ENCODE measurements at regions of chr7 and their contacts with region 1.

Region 1: DNA sequence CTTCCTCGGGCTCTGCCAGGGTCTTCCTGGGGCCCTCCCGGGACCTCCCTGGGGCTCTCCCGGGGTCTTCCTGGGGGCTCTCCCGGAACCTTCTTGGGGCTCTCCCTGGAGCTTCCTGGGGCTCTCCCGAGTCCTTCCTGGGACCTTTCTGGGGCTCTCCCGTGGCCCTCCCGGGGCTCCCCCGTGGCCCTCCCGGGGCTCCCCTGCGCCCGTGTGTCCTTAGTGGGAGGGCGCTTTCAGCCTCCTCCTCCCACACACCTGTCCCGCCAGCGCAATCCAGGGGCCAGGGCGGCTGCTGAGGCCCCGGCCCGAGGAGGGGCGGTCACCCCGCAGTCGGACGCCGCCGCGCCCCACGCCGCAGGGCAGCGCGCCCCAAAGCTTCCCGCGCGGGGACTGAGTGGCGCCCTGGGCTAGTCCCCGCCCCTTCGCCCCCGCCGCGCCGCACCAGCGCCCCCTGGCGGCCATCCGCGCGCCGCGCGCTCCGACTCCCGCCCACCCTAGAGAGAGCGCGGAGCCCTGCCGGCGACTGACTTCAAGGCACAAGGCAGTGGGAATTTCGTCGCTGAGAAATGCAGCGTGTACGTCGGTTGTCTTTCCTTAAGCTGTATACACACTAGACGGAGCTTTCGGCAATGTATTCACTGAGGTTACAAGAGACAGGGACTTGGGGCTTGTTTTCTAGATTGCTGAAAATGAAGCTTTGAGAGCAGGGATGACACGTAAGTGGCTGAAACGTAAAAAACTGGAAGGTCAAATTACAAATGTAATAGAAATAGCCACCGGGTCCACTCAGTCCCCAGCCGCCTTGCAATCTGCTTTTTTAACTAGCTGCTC is 47.1 kb downstream of the INSIG1 start:
- DNase-seq: peak; percentile 40 to 95
- H3K4me3 ChIP-seq: no peak overlapping the region
- CTCF ChIP-seq: no peak
- POLR2A ChIP-seq: no peak

Region 2: DNA sequence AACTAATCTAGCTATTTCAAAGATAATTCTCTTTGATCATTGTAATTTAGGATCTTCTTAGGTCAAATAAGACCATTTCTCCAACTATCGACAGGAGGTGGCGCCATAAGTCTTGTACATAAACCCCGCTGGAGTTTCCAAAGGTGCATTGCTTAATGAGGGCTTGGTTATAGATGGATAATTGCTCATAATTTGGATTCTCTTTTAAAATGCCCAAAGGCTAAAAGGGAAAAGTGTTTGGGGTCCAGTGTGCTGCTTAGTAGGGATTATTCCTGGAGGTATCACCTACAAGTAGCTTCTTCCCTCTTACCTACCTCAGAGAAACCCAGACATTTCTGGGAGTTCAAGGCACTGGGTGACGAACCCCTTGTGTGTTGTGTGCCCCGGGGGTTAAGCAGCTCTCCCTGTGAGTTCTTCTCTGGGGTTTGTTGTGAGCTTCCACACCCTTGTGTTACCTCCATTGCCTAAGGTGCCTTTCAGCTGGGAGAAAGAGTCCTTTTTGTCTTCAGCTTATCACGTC is 417.1 kb before region 1 on chr7:
- intact Hi-C with region 1: loop called (anchors 5 kb)
- DNase-seq: peak in 1 of 2 donors; percentile 90
- H3K4me3 ChIP-seq: peak overlapping the region; percentile 24
- CTCF ChIP-seq: no peak
- POLR2A ChIP-seq: no peak

Region 3: DNA sequence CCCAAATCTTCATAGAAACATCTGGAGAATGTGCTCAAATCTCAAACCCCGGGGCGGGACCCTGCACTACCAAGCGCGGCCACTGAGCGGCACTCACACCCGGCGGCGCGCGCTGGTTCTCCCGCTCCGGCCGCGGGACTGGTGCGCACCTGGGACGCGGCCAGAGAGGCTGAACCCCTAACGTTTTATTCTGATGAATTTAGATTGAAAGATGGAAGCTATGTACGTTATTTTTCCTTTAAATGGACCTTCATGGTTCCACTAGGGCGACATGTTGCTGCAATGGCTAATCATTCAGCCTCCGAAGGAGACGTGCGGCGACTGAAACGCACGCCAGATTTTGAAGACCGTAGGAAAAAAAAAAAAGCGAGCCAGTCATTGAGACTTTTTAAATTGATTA is 154.1 kb before region 1 on chr7:
- intact Hi-C with region 1: loop called (anchors 5 kb)
- DNase-seq: peak in 1 of 2 donors; percentile 91
- H3K4me3 ChIP-seq: no peak overlapping the region
- CTCF ChIP-seq: peak in 1 of 3 donors; percentile 44
- POLR2A ChIP-seq: no peak

Region 4: GRCh38 chr7:155543011-155543876 is 198.4 kb after region 1 on chr7:
- intact Hi-C with region 1: no loop called
- DNase-seq: no peak
- H3K4me3 ChIP-seq: no peak overlapping the region
- CTCF ChIP-seq: no peak
- POLR2A ChIP-seq: no peak

Region 5: DNA sequence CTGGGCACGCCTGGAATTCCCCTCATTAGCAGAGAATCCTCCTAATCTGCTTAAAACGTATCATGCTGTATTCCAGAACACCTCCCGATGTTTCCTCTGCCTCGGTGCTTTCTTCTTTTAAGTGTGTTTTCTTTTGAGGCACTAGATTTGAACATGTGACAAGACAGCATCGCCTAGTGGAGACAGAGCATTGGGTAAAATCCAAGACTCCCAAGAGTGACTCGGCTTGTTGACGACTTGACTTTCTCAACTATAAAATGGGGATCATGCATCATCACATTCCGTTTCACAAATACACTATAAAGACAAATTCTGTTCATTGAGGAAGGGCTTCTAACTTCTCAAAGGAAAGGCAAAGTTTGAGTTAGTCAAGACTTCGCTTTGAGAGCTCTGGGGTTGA is 1190.1 kb after region 1 on chr7:
- intact Hi-C with region 1: no loop called
- DNase-seq: no peak
- H3K4me3 ChIP-seq: no peak overlapping the region
- CTCF ChIP-seq: no peak
- POLR2A ChIP-seq: no peak